Activated CD4-positive, alpha-beta memory T cell treated with anti-CD3 and anti-CD28 coated beads, Interleukin-2, amount 10 ng/mL, durations not matched to agents 7 days and 5 days (primary cell): ENCODE measurements at regions of chr11 and their contacts with region 1.

Region 1: DNA sequence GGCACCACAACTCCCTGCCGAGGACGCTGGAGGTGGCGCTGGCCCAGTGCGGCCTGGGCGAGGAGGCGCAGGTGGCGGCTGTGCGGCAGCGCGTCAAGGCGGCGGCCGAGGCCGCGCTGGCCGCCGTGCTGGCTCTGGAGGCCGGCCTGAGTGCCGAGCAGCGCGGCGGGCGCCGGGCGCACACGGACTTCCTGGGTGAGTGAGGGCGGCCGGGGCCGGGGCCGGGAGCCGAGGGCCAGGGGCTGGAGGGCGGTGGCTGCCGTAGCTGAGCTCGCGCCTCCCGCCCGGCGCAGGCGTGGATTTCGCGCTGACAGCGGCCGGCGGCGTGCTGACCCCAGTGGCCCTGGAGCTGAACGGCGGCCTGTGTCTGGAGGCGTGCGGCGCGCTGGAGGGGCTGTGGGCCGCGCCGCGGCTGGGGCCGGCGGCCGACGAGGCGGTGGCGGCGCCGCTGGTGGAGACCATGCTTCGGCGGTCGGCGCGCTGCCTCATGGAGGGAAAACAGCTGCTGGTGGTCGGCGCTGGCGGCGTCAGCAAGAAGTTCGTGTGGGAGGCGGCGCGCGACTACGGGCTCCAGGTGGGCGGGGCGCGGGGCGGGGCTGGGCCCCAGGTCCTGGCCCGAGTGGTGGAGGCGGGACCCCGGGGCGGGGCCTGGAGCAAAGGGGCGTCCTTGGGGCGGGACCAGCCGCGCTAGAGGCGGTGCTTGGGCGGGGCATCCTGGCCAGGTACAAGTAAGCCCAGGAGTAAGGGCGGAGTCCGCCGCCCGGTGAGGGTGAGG is 5.4 kb downstream of the CARNS1 start:
- DNase-seq: peak; percentile 97
- H3K4me3 Mint-ChIP-seq: peak overlapping the region; percentile 71
- H3K27ac Mint-ChIP-seq: no peak overlapping the region
- H3K4me1 Mint-ChIP-seq: peaks cover 56% of the 10 kb centered on the region
- H3K27me3 Mint-ChIP-seq: peaks cover 12% of the 10 kb centered on the region

Region 2: GRCh38 chr11:67373925-67374618 is 46.8 kb before region 1 on chr11:
- CTCF ChIA-PET with region 1: no interaction called
- POLR2A ChIA-PET with region 1: no interaction called
- DNase-seq: peak; percentile 55
- H3K4me3 Mint-ChIP-seq: peak overlapping the region; percentile 63
- H3K27ac Mint-ChIP-seq: no peak overlapping the region
- H3K4me1 Mint-ChIP-seq: peaks cover 39% of the 10 kb centered on the region
- H3K27me3 Mint-ChIP-seq: peaks cover 63% of the 10 kb centered on the region

Region 3: GRCh38 chr11:67433536-67434394 is 12.9 kb after region 1 on chr11:
- CTCF ChIA-PET with region 1: interaction called, 3 read pairs
- POLR2A ChIA-PET with region 1: interaction called, 74 read pairs
- DNase-seq: no peak
- H3K4me3 Mint-ChIP-seq: peak overlapping the region; percentile 94
- H3K27ac Mint-ChIP-seq: peak overlapping the region; percentile 73
- H3K4me1 Mint-ChIP-seq: peaks cover 65% of the 10 kb centered on the region
- H3K27me3 Mint-ChIP-seq: no peaks in the 10 kb centered on the region

Region 4: GRCh38 chr11:67545280-67545679 is 124.4 kb after region 1 on chr11:
- CTCF ChIA-PET with region 1: no interaction called
- POLR2A ChIA-PET with region 1: no interaction called
- DNase-seq: no peak
- H3K4me3 Mint-ChIP-seq: no peak overlapping the region
- H3K27ac Mint-ChIP-seq: no peak overlapping the region
- H3K4me1 Mint-ChIP-seq: no peaks in the 10 kb centered on the region
- H3K27me3 Mint-ChIP-seq: peaks cover 6% of the 10 kb centered on the region